Caco-2 (cell line): ENCODE measurements at regions of chr12 and their contacts with region 1.

Region 1: DNA sequence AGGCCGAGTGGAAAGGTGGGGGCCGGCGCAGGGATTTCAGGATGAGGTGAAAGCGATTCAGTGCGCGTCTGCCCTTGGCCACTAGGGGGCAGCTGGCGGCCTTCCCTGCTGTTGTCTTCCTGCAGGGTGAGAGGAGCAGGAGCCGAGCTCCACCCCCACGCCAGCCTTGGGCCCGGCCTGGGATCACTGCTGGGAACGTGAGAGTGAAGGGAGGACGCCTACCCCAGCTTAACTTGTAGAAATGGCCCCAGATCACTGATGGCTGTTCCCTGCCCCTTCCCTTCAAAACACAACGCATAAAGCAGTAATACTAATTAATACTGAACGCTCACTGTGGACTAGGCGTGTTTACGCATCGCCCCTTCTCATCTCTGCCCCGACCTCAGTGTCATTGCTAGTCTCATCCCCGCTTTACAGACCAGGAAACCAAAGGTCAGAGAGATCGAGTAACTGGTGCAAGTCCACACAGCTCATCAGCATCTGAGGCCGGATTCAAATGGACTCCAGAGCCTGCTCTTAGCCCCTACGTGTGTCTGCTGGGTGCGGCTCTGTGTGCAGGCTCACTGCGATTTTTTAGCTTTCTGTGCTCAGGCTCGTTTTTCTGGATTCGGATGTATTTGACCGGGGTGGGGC is 24.3 kb downstream of the MVK start:
- DNase-seq: peak; percentile 87 to 90
- H3K4me3 ChIP-seq: no peak overlapping the region
- H3K4me3 Mint-ChIP-seq: no peak overlapping the region
- H3K27ac Mint-ChIP-seq: peak overlapping the region; percentile 34
- H3K4me1 ChIP-seq: peaks cover 11% of the 10 kb centered on the region
- H3K4me1 Mint-ChIP-seq: peaks cover 8% of the 10 kb centered on the region
- H3K27me3 ChIP-seq: no peaks in the 10 kb centered on the region
- H3K27me3 Mint-ChIP-seq: no peaks in the 10 kb centered on the region
- CTCF ChIP-seq: peak; percentile 93 to 96

Region 2: GRCh38 chr12:109573029-109573913 is 24.6 kb before region 1 on chr12 and contains the starts of genes MMAB and MVK:
- CTCF ChIA-PET with region 1: interaction called, 14 read pairs
- POLR2A ChIA-PET with region 1: interaction called, 4 read pairs
- intact Hi-C with region 1: no loop called
- DNase-seq: peak; percentile 99 to 100
- H3K4me3 ChIP-seq: peak within 1 kb of the TSS; percentile 65
- H3K4me3 Mint-ChIP-seq: peak within 1 kb of the TSS; percentile 81
- H3K27ac Mint-ChIP-seq: peak within 1 kb of the TSS; percentile 96
- H3K4me1 ChIP-seq: no peaks in the 10 kb centered on the region; the same call in 1 of the 2 replicates
- H3K4me1 Mint-ChIP-seq: no peaks in the 10 kb centered on the region
- H3K27me3 ChIP-seq: no peaks in the 10 kb centered on the region
- H3K27me3 Mint-ChIP-seq: no peaks in the 10 kb centered on the region
- CTCF ChIP-seq: no peak
- total RNA-seq, gene MMAB: 42.3 and 48.9 TPM in 2 replicates
- total RNA-seq, gene MVK: 28.4 and 28.9 TPM in 2 replicates

Region 3: DNA sequence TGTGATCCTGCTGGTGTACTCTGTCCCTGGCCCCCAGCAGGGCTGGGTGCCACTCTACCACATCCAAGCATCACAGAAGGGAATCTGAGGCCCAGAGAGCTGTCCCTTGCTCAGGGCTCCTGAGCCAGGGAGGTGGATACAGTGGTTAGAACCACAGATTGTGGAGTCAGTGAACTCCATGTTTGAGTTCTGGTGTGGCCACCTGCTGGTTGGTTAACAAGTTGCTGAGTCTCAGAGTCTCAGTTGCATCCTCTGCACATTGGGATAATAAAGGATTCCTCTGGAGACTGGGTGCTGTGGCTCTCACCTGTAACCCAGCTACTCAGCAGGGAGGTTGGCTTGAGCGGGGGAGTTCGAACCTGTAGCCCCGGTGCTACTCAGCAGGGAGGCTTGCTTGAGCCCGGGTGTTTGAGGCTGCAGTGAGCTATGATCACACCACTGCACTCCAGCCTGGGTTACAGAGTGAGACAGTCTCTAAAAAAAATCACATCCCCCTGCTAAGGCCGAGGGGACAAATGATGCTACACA is 15.1 kb after region 1 on chr12:
- CTCF ChIA-PET with region 1: interaction called, 8 read pairs
- POLR2A ChIA-PET with region 1: no interaction called
- intact Hi-C with region 1: loop called (anchors 1 kb)
- DNase-seq: no peak
- H3K4me3 ChIP-seq: no peak overlapping the region
- H3K4me3 Mint-ChIP-seq: no peak overlapping the region
- H3K27ac Mint-ChIP-seq: no peak overlapping the region
- H3K4me1 ChIP-seq: no peaks in the 10 kb centered on the region
- H3K4me1 Mint-ChIP-seq: no peaks in the 10 kb centered on the region
- H3K27me3 ChIP-seq: no peaks in the 10 kb centered on the region
- H3K27me3 Mint-ChIP-seq: no peaks in the 10 kb centered on the region
- CTCF ChIP-seq: peak; percentile 30 to 47

Region 4: GRCh38 chr12:109695961-109696461 is 98.1 kb after region 1 on chr12:
- CTCF ChIA-PET with region 1: interaction called, 8 read pairs
- POLR2A ChIA-PET with region 1: no interaction called
- intact Hi-C with region 1: loop called (anchors 5 kb)
- DNase-seq: peak; percentile 89 to 91
- H3K4me3 ChIP-seq: no peak overlapping the region
- H3K4me3 Mint-ChIP-seq: peak overlapping the region; percentile 42
- H3K27ac Mint-ChIP-seq: peak overlapping the region; percentile 76
- H3K4me1 ChIP-seq: peaks cover 42% of the 10 kb centered on the region
- H3K4me1 Mint-ChIP-seq: peaks cover 35% of the 10 kb centered on the region
- H3K27me3 ChIP-seq: no peaks in the 10 kb centered on the region
- H3K27me3 Mint-ChIP-seq: no peaks in the 10 kb centered on the region
- CTCF ChIP-seq: no peak

Region 5: DNA sequence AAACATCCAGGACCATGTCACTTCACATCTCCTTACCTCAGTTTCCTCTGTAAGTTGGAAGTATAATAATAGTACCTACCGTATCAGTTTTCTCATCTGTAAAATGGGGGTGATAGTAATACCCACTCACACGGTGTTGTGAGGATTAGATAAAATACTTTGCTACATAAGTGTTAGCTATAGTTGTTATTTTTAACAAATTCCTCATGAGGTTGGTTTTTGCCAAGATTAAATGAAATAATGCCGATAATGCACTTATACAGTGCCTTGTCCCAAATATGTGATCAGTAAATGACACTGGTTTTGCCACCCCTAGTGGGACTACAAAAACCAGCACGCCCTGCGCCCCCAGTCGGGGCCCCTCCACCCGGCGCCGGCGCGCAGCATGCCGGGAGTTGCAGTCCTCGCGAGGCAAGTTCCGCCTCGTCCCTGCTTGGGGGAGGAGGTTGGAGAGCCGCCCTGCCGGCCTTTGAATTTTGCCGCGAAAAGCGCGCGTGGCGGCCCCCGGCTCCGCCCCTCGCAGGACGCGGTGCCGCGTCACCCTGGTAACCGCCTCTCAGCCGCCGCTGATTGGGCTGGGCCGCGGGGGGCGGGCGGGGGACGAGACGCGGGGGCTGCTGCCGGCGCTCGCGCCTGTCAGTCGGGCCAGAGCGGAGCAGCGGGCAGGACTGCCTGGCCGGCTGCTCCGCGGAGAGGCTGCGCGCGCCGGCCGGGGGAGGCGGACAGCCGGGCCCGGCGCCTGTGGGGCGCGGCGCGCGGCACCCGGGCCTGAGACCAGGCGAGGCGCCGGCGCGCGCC is 115.5 kb after region 1 on chr12 and contains the start of gene FAM222A:
- CTCF ChIA-PET with region 1: interaction called, 29 read pairs
- POLR2A ChIA-PET with region 1: no interaction called
- intact Hi-C with region 1: loop called (anchors 1 kb)
- DNase-seq: peak; percentile 97 to 98
- H3K4me3 ChIP-seq: peak within 1 kb of the TSS; percentile 80
- H3K4me3 Mint-ChIP-seq: peak within 1 kb of the TSS; percentile 70
- H3K27ac Mint-ChIP-seq: no peak within 1 kb of the TSS
- H3K4me1 ChIP-seq: peaks cover 23% of the 10 kb centered on the region
- H3K4me1 Mint-ChIP-seq: peaks cover 22% of the 10 kb centered on the region
- H3K27me3 ChIP-seq: no peaks in the 10 kb centered on the region
- H3K27me3 Mint-ChIP-seq: no peaks in the 10 kb centered on the region
- CTCF ChIP-seq: peak in 1 of 2 experiments; percentile 35
- total RNA-seq, gene FAM222A: 17.4 and 18.0 TPM in 2 replicates

Region 6: DNA sequence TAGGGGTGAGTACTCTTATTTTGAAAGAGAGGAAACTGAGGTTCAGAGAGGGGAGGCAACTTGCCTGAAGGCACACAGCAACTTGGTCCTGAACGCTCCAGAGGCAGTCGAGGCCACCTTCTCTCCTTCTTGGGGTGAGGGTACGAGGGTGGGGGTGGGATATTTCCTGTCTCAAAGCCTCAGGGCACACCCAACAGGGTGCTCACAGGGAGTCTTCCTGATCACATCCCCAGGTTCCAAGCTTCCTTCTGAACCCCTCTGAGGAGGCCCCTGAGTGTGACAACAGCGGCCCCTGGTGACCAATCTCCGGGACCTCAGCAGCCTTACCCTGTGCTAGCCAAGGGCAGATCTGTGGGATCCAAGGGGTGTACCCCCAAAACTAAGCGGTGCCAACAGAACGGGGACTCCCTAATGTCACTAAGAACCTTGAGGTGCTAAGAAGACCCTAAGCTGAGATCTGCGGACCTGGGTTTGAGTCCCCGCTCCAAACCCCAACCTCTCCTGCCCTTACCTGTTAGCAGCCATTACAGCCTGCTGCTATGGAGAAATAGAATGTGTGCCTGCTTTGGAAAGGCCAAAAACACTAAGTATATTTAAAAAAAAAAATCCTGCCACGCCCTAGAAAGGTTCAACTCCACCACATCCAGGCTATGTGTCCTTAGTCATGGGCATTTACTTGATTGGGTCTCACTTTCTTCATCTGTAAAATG is 177.4 kb after region 1 on chr12:
- CTCF ChIA-PET with region 1: interaction called, 69 read pairs
- POLR2A ChIA-PET with region 1: no interaction called
- intact Hi-C with region 1: loop called (anchors 1 kb)
- DNase-seq: peak; percentile 81 to 85
- H3K4me3 ChIP-seq: no peak overlapping the region
- H3K4me3 Mint-ChIP-seq: no peak overlapping the region
- H3K27ac Mint-ChIP-seq: no peak overlapping the region
- H3K4me1 ChIP-seq: peaks cover 7% of the 10 kb centered on the region; the same call in 1 of the 2 replicates
- H3K4me1 Mint-ChIP-seq: peaks cover 12% of the 10 kb centered on the region
- H3K27me3 ChIP-seq: no peaks in the 10 kb centered on the region
- H3K27me3 Mint-ChIP-seq: no peaks in the 10 kb centered on the region
- CTCF ChIP-seq: peak; percentile 79 to 94